PC-9 (cell line): ENCODE measurements at regions of chr18 and their contacts with region 1.

Region 1: DNA sequence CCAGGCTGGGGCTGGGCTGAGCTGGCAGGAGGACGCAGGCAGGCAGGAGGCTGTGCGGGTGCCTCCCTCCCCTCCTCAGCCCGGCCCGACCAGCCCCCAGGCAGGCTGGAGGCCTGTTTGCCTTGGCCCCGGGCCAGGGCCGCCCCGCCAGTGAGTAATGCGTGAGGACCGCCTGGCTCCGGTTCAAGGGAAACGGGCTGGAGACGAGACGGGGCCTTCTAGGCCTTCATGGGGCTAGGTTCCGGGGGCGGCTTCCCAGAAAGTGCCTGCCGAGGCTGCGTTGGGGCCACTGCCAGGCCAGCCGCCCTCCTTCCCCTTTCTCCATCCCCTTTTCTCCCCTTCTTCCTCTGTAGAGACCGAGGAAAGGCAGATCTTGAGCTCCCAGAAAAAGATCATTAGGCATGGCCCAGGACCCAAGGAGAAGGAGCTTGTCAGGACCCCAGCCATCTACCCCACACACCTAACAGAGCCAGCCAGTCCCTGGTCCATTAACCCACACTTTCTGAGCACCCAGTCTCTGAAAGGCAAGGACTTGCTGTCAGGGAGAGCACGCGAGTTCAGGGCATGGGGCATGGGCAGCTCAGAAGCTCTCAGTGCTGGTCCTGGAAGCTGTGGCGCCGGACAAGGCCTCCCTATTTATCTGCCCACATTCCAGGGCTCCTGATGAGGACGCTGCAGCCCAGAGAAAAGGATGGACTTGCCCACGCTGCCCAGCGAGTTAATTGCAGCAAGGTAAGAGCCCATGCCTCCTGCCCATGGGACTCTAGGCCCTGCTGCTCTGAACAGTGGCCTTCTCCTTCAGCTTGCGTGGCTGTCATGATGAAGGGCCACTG is 48.5 kb downstream of the SMAD7 start:
- DNase-seq: peak; percentile 72 to 88
- H3K4me3 ChIP-seq: no peak overlapping the region
- H3K27ac ChIP-seq: no peak overlapping the region
- H3K4me1 ChIP-seq: peaks cover 38% of the 10 kb centered on the region
- H3K27me3 ChIP-seq: no peaks in the 10 kb centered on the region
- CTCF ChIP-seq: no peak

Region 2: GRCh38 chr18:47846431-47846830 is 1055.8 kb before region 1 on chr18:
- CTCF ChIA-PET with region 1: no interaction called
- POLR2A ChIA-PET with region 1: no interaction called
- intact Hi-C with region 1: no loop called
- DNase-seq: no peak
- H3K4me3 ChIP-seq: no peak overlapping the region
- H3K27ac ChIP-seq: no peak overlapping the region
- H3K4me1 ChIP-seq: no peaks in the 10 kb centered on the region
- H3K27me3 ChIP-seq: no peaks in the 10 kb centered on the region
- CTCF ChIP-seq: no peak

Region 3: GRCh38 chr18:48992699-48993555 is 90.7 kb after region 1 on chr18:
- CTCF ChIA-PET with region 1: no interaction called
- POLR2A ChIA-PET with region 1: no interaction called
- intact Hi-C with region 1: loop called (anchors 5 kb)
- DNase-seq: peak in 1 of 2 experiments; percentile 48
- H3K4me3 ChIP-seq: no peak overlapping the region
- H3K27ac ChIP-seq: peak overlapping the region; percentile 92
- H3K4me1 ChIP-seq: peaks cover 94% of the 10 kb centered on the region
- H3K27me3 ChIP-seq: no peaks in the 10 kb centered on the region
- CTCF ChIP-seq: no peak

Region 4: GRCh38 chr18:49041435-49042245 is 139.4 kb after region 1 on chr18:
- CTCF ChIA-PET with region 1: no interaction called
- POLR2A ChIA-PET with region 1: no interaction called
- intact Hi-C with region 1: no loop called
- DNase-seq: peak in 1 of 2 experiments; percentile 22
- H3K4me3 ChIP-seq: no peak overlapping the region
- H3K27ac ChIP-seq: no peak overlapping the region
- H3K4me1 ChIP-seq: no peaks in the 10 kb centered on the region
- H3K27me3 ChIP-seq: no peaks in the 10 kb centered on the region
- CTCF ChIP-seq: peak; percentile 72